PC-3 (cell line): ENCODE measurements at regions of chr11 and their contacts with region 1.

Region 1: DNA sequence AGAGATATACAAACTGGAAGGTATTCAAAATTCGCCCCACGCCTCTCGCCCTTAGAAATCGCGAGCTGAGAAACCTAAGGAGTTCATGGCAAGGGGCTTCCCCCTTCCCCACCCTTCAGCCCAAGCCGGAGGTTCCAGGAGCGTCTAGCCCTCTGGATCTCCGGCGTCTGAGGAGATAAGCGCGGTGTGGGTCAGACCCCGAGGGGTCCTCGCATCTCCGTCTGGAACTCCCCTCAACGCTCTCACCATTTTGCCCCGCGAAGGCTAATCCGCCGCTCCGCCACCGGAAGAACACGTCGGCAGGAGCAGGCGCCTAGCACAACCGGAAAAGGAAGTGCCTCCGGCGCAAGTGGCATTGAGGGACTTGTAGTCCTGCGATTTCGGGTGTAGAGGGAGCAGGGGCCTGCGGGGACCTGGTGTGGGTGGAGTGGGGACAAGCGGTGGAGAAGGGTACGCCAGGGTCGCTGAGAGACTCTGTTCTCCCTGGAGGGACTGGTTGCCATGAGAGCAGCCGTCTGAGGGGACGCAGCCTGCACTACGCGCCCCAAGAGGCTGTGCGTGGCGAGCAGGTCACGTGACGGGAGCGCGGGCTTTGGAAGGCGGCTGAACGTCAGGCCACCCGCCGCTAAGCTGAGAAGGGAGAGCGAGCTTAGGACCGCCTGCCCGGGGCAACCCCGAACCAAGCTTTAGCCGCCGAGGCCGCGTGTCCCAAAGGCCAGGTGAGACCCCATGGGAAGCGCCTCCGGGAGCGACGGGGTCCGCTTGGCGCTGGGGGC is at the starts of genes FEN1 and TMEM258:
- DNase-seq: peak; percentile 93
- ATAC-seq: peak; percentile 87
- H3K4me3 ChIP-seq: peak within 1 kb of the TSS; percentile 97
- H3K27ac ChIP-seq: peak within 1 kb of the TSS; percentile 89
- H3K4me1 ChIP-seq: peaks cover 14% of the 10 kb centered on the region
- H3K27me3 ChIP-seq: no peaks in the 10 kb centered on the region
- CTCF ChIP-seq: no peak
- total RNA-seq, gene FEN1: 132 and 137 TPM in 2 replicates
- total RNA-seq, gene TMEM258: 79.2 and 110 TPM in 2 replicates

Region 2: DNA sequence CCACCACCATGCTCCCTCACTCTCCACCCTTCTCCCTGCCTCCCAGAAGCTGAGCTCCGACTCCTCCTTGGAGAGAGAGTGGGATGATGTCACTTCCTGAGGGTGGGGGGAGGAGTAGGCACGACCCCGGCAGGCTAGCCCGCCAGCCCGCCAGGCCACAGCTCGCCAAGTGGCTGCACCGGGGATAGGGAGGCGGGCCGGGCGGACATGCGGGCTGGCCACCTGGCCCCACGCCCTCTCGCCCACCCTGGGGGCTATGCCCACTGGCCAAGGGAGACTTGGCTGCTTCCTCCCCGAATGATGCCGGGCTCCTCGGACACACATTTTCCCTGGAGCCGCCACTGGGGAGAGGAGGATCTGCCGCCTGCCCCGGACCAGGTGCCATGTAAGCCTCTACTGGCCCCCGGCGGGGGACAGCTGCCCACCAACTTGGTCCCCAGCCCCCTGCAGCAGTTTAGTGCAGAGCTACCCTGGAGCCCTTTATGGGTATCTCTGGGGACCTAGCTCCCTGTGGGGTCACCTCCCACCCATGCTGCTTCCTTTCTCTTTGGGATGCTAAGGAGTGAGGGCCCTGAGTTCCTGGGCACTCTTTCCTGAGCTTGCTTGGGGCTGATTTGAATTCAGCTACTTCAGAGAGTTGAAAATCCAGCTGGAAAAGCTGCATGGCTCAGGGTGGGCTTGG is 73.7 kb before region 1 on chr11:
- CTCF ChIA-PET with region 1: no interaction called
- POLR2A ChIA-PET with region 1: no interaction called
- intact Hi-C with region 1: no loop called
- DNase-seq: no peak
- ATAC-seq: no peak
- H3K4me3 ChIP-seq: no peak overlapping the region
- H3K27ac ChIP-seq: no peak overlapping the region
- H3K4me1 ChIP-seq: no peaks in the 10 kb centered on the region
- H3K27me3 ChIP-seq: no peaks in the 10 kb centered on the region
- CTCF ChIP-seq: no peak

Region 3: DNA sequence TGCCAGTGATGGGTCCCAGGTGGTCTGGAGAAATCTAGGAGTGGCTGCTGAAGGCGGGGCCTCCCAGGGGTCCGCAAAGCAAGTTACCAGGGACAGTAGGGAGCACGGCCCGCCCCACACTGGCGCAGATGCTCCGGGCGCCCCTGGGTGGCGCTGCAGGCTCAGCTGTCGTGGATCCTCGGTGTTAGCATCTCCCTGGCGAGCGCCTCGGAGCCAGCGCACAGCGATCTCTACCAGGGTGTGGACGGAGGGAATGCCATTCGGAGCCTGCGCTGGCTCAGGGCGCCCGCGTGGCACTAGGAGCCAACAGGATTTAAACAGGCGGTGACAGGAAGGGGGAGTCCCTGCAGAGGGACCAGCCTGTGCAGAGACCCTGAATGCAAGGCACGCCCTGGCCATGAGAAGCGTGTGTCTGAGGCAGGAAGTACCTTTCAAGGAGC is 78.7 kb after region 1 on chr11:
- CTCF ChIA-PET with region 1: interaction called, 4 read pairs
- POLR2A ChIA-PET with region 1: no interaction called
- intact Hi-C with region 1: loop called (anchors 1 kb)
- DNase-seq: peak; percentile 87
- ATAC-seq: peak; percentile 93
- H3K4me3 ChIP-seq: peak overlapping the region; percentile 48
- H3K27ac ChIP-seq: no peak overlapping the region
- H3K4me1 ChIP-seq: peaks cover 3% of the 10 kb centered on the region; the same call in 1 of the 2 replicates
- H3K27me3 ChIP-seq: no peaks in the 10 kb centered on the region
- CTCF ChIP-seq: peak; percentile 97

Region 4: GRCh38 chr11:61899146-61899841 is 106.8 kb after region 1 on chr11:
- CTCF ChIA-PET with region 1: no interaction called
- POLR2A ChIA-PET with region 1: no interaction called
- intact Hi-C with region 1: loop called (anchors 2 kb)
- DNase-seq: peak; percentile 94
- ATAC-seq: peak; percentile 85
- H3K4me3 ChIP-seq: no peak overlapping the region
- H3K27ac ChIP-seq: no peak overlapping the region
- H3K4me1 ChIP-seq: no peaks in the 10 kb centered on the region
- H3K27me3 ChIP-seq: no peaks in the 10 kb centered on the region
- CTCF ChIP-seq: peak; percentile 99

Region 5: DNA sequence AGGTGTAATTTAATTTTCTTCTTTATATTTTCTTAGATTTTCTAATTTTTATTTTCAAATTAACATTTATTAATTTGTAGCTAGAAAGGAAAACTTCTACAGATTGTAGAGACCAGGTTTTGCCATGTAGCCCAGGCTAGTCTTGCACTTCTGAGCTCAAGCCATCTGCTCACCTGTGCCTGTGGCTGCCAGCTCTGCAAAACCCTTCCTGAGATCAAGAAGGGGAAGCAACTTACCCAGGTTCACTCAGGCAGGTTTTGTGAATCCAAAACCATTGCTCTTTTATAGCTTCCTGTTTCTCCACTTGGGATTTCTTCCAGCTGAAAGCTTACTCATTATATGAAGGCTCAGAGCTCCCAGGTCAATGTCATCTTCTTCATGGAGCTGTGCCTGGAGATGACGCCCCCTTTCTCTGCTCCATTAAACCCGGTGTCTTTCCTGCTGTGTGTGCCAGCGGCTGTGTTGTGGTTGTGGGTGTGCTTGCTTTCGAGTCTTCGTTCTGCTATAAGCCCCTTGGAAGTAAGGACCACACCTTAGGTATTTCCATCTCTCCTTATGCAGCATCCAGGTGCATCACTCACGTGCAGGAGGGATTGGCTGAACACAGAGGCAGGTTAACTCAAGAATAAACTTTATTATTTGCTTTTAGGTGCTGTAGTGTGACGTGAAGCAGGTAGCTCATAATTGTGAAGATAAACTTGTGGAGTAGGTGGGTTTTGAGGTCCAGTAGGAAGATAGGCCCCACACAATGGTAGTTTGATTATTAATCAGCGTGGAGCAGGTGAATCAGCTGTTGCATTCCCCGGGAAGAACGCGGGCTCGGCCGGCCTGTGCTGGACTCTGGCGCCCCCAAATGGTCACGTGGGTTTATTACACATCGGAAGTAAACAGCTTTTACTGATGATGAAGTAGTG is 289.1 kb after region 1 on chr11:
- CTCF ChIA-PET with region 1: interaction called, 6 read pairs
- POLR2A ChIA-PET with region 1: no interaction called
- intact Hi-C with region 1: loop called (anchors 1 kb)
- DNase-seq: peak; percentile 89
- ATAC-seq: peak; percentile 86
- H3K4me3 ChIP-seq: peak overlapping the region; percentile 21; the same call in 1 of the 2 replicates
- H3K27ac ChIP-seq: no peak overlapping the region
- H3K4me1 ChIP-seq: peaks cover 11% of the 10 kb centered on the region
- H3K27me3 ChIP-seq: no peaks in the 10 kb centered on the region
- CTCF ChIP-seq: peak; percentile 98

Region 6: DNA sequence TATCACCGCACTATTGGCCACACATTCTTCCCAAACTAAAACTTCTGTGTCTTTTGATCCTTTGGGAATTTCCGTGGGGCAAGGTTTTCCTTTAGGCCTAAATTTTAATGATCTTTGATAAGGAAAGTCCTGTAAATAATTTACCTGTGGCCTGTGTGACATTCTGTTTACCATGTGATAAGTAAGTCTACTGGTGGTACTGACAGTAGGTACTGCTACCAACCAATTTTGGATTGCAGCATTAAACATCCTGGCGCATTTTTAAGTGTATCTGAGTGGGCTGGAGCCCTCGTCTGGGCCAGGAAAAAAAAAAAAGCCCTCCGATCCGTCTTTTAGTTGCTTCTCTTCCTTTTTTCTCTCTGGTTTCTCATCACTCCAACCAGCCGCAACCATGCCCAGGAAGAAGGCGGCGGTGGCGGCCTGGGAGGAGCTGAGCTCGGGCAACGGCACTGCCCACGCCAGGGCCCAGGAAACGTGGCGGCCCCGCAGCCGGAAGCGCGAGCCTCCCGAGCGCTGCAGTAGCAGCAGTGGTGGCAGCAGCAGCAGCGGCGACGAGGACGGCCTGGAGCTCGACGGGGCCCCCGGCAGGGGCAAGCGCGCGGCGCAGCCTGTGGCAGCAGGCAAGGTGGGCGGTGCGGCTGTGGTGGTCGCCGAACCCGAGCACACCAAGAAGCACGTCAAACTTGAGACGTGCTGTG is 578.4 kb after region 1 on chr11:
- CTCF ChIA-PET with region 1: no interaction called
- POLR2A ChIA-PET with region 1: no interaction called
- intact Hi-C with region 1: loop called (anchors 5 kb)
- DNase-seq: no peak
- ATAC-seq: no peak
- H3K4me3 ChIP-seq: no peak overlapping the region
- H3K27ac ChIP-seq: no peak overlapping the region
- H3K4me1 ChIP-seq: no peaks in the 10 kb centered on the region
- H3K27me3 ChIP-seq: no peaks in the 10 kb centered on the region
- CTCF ChIP-seq: no peak